ENCODE measurements at regions of chr19 and their contacts with region 1.

Region 1: DNA sequence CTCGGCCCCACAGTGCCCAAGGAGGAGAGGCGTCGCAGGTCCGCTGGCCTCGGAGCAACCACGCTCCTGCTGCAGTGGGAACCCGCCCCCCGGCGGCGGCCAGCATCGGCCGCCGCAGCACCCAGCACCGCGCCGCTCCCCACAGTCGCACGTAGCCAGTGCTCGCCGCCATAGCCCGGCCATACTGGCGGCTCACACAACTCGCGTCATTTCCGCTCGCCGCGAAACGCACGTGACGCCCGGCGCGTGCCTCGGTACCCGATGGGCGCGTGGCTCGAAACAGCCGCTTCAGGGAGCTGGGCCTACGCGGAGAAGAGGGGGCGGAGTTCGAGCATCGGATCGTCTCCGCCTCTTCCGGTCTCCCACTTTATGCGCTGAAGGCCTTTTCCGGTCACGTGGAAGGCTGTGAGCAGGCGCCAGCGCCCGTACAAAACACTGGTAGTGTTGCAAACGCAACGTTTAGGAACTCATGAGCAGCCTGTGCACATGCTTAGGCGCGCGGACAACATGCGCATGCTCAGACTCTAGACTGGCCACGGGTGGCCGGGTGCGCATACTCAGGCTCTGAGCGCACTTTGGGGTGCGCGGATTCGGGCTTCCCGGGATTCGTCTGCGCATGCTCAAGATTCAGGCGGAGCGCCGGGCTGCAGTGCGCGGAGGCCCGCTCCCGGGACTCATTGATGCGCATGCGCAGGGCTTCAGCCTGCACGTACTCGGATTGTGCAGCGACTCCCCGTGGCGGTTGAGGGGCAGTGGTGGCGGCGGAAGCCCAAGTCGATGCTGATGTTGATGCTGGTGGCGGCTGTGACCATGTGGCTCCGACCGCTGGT is at the starts of genes CATSPERD and LONP1:
- DNase-seq: peak; percentile 98
- H3K4me3 ChIP-seq: peak within 1 kb of the TSS; percentile 46 to 94 (median 66)
- H3K27ac ChIP-seq: peak within 1 kb of the TSS; percentile 91
- H3K4me1 ChIP-seq: peaks cover 14% of the 10 kb centered on the region
- H3K27me3 ChIP-seq: no peaks in the 10 kb centered on the region
- CTCF ChIP-seq: peak; percentile 81 to 93
- total RNA-seq, gene CATSPERD: not detected
- total RNA-seq, gene LONP1: 73.7 to 88.3 TPM

Region 2: DNA sequence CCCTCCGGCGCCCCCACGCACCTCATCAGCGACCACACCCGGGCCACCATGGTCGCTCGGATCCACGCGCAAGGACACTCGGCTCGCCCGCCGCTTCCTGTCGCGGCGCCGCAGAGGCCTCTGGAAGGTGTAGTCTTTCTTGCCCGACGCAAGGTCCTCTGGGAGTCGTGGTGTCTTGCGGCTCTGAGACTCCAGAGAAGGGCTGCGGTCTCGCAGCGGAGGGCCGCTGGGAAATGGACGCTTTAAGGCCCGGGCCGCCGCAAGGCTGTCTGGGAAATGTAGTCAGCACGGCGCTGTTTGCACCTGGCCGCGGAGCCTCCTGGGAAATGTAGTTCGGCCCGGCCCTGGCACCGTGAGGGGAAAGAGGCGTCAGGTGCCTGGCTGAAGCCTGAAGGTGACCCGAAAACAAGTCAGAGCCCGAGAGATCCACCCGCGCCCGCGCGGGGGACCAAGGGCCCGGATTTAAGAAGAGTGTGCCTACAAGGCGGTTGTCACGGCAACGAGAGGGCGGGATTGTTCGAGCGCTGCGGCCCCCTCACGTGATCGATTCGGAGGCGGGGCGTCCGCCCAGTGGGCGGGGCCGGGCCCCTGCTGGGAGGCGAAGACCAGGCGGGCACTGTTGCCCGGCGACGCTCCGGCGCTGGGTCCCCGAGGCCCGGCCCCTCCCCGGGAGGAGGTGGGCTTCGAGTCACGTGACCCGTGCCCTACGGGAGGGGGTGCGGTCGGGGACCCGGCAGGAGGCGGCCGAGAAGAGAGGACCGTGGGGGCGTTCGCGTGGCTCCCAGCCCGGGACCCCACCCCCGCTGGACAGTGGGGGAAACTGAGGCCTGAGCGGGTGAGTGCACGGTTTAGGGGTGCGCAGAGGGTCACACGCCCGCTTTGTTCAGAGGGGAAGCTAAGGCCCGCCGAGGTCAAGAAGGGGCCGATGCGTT is 39.5 kb before region 1 on chr19 and contains the starts of genes HSD11B1L and MICOS13:
- CTCF ChIA-PET with region 1: no interaction called
- dilution Hi-C with region 1: no loop called
- in situ Hi-C with region 1: no loop called
- intact Hi-C with region 1: loop called (anchors 1 kb)
- DNase-seq: peak; percentile 98
- H3K4me3 ChIP-seq: peak within 1 kb of the TSS; percentile 78 to 88 (median 83)
- H3K27ac ChIP-seq: peak within 1 kb of the TSS; percentile 95
- H3K4me1 ChIP-seq: peaks cover 5% of the 10 kb centered on the region
- H3K27me3 ChIP-seq: no peaks in the 10 kb centered on the region
- CTCF ChIP-seq: no peak
- total RNA-seq, gene HSD11B1L: 6.4 to 10.5 TPM
- total RNA-seq, gene MICOS13: 25.3 to 71.2 TPM

Region 3: GRCh38 chr19:5690125-5690954 is 29.8 kb before region 1 on chr19 and contains the start of gene RPL36:
- CTCF ChIA-PET with region 1: interaction called, 40 read pairs
- dilution Hi-C with region 1: no loop called
- in situ Hi-C with region 1: no loop called
- intact Hi-C with region 1: loop called (anchors 1 kb)
- DNase-seq: peak; percentile 95
- H3K4me3 ChIP-seq: peak within 1 kb of the TSS; percentile 65 to 97 (median 81)
- H3K27ac ChIP-seq: peak within 1 kb of the TSS; percentile 77
- H3K4me1 ChIP-seq: peaks cover 26% of the 10 kb centered on the region
- H3K27me3 ChIP-seq: no peaks in the 10 kb centered on the region
- CTCF ChIP-seq: peak; percentile 95 to 97
- total RNA-seq, gene RPL36: 323 to 990 TPM

Region 4: GRCh38 chr19:5738426-5738825 is 18.2 kb after region 1 on chr19:
- CTCF ChIA-PET with region 1: no interaction called
- dilution Hi-C with region 1: no loop called
- in situ Hi-C with region 1: no loop called
- intact Hi-C with region 1: no loop called
- DNase-seq: peak; percentile 32
- H3K4me3 ChIP-seq: no peak overlapping the region
- H3K27ac ChIP-seq: no peak overlapping the region
- H3K4me1 ChIP-seq: no peaks in the 10 kb centered on the region
- H3K27me3 ChIP-seq: no peaks in the 10 kb centered on the region
- CTCF ChIP-seq: no peak